Lower lobe of right lung (tissue), 2 donors: ENCODE measurements at regions of chr1 and their contacts with region 1.

Region 1: DNA sequence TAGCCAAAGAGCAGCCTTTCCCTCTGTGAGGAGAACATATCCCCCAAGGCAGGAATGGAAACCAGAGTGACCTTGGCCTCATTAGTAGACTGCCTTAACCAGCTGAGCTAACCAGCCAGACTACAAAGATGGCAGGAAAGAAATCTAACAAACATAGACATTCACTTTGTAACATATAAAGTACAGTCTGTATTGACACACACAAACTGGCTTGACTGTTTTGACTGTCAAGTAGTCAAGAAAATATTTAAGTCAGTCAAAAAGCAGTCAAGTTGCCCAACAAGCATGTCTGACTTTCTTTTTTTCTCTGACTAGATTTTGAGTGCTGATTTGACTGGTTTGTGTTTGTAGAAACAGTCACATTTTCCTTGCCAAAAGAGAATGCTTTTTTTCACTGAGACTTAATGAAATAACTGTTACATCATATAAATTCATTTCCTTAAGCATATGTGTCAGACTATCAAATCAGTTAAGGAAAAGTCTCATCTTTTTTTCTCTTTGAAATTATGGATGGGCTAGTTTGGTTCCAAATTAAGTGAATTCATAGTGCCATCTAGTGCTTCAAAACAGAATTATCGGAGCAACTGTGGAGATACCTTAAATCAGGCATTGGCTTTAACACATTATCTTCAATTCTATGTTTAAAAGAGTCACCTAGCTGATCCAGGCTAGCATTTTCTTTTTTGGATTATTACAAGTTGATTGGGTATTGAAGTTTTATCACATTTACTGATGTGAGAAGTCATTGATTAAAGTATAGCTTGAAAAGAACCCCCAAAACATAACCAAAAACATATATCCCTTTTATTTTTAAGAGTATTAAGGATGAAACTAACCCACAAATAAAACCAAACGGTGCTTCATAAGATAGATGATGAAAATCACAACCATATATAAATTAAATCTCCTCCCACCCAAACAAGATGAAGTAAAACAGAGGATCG is 75.0 kb downstream of the ATP6V1G3 start:
- DNase-seq: no peak
- ATAC-seq: peak; percentile 61 to 89
- H3K4me3 ChIP-seq: no peak overlapping the region
- H3K27ac ChIP-seq: no peak overlapping the region
- H3K4me1 ChIP-seq: no peaks in the 10 kb centered on the region
- H3K27me3 ChIP-seq: no peaks in the 10 kb centered on the region
- CTCF ChIP-seq: peak; percentile 73

Region 2: GRCh38 chr1:197521118-197521739 is 944.2 kb before region 1 on chr1:
- intact Hi-C with region 1: loop called (anchors 10 kb)
- DNase-seq: no peak
- ATAC-seq: no peak
- H3K4me3 ChIP-seq: no peak overlapping the region
- H3K27ac ChIP-seq: no peak overlapping the region
- H3K4me1 ChIP-seq: no peaks in the 10 kb centered on the region
- H3K27me3 ChIP-seq: no peaks in the 10 kb centered on the region
- CTCF ChIP-seq: peak; percentile 53

Region 3: DNA sequence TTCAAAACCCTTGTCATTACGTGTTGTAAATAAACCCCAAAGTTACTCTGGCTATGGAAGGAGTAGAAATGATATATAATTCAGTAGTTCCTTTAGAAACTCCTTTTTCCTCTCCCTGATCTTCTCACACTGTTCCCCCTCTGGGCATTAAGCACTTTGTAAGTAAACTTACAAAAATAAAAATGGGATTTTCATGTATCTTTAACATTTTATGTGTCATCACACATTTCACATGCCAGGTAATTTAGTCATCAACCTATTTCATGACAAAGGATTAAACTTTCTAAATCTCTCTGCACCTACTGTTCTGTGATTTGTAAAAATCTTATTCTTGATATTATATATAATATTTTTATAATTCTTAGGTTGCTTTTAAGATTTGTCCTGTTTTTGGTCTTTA is 131.7 kb before region 1 on chr1:
- intact Hi-C with region 1: no loop called
- DNase-seq: no peak
- ATAC-seq: no peak
- H3K4me3 ChIP-seq: no peak overlapping the region
- H3K27ac ChIP-seq: no peak overlapping the region
- H3K4me1 ChIP-seq: no peaks in the 10 kb centered on the region
- H3K27me3 ChIP-seq: no peaks in the 10 kb centered on the region
- CTCF ChIP-seq: no peak

Region 4: GRCh38 chr1:198549866-198550265 is 84.4 kb after region 1 on chr1:
- intact Hi-C with region 1: no loop called
- DNase-seq: no peak
- ATAC-seq: peak in 1 of 2 donors; percentile 34
- H3K4me3 ChIP-seq: no peak overlapping the region
- H3K27ac ChIP-seq: no peak overlapping the region
- H3K4me1 ChIP-seq: peaks cover 5% of the 10 kb centered on the region
- H3K27me3 ChIP-seq: no peaks in the 10 kb centered on the region
- CTCF ChIP-seq: no peak